Psoas muscle (tissue), 8 donors: ENCODE measurements at regions of chr2 and their contacts with region 1.

Region 1: DNA sequence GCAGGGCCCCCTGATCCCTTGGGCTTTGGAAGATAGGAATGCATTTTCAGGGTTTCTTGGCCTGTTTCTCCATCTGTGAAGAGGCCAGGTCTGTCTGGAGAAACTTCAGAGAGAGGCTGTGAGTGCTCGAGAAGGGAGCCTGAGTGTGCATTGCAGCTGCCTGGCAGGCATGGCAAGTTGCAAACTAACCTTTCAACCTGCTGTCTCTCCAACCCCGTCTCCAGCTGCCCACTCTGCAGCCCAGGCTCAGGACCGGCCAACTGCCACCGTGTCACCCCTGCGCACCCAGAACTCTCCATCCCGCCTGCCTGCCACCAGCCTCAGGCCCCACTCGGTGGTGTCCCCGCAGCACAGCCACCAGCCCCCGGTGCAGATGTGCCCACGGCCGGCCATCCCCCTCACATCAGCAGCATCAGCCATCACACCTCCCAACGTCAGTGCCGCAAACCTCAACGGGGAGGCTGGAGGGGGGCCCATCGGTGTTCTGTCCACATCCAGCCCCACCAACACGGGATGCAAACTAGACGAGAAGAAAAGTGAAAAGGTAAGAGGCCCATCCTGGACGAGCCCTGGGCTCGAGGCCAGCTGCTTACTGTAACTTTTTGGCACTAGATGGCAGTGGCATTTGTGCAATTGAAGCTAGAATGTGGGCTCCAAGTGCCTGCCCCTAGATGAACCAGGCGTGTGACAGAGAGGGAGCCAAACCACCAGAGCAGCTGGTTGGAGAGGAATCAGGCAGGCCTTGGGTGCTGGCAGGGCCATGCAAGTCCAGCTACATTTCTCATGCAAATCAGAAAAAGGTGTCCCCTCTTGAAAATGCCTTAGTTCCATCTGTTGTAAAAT is 164.6 kb downstream of the SEPTIN10 start:
- DNase-seq: peak; percentile 74 to 87
- ATAC-seq: peak; percentile 88 to 92 (median 89)
- H3K4me3 ChIP-seq: peak overlapping the region; percentile 32
- H3K27ac ChIP-seq: peak overlapping the region; percentile 69
- H3K4me1 ChIP-seq: peaks cover 57% of the 10 kb centered on the region
- H3K27me3 ChIP-seq: no peaks in the 10 kb centered on the region
- CTCF ChIP-seq: no peak

Region 2: DNA sequence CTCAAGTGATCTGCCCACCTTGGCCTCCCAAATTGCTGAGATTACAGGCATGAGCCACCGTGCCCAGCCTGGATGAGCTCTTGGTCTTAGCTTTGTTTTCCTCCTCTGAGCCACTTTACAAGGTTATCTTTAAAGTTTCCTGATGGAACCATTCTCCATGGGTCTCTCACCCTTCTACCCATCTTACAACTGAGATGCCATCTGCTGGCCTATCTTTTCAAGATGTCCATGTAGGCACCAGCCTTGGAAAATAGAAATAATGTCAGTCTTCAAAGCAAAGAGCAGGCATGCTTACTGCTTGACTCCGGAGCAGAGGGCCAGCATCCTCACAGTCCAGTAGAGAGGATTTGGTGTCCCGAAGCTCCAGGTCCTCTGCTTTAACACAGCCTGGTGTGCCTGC is 40.8 kb after region 1 on chr2:
- intact Hi-C with region 1: loop called in 1 of 2 experiments (anchors 5 kb)
- DNase-seq: no peak
- ATAC-seq: no peak
- H3K4me3 ChIP-seq: no peak overlapping the region
- H3K27ac ChIP-seq: no peak overlapping the region
- H3K4me1 ChIP-seq: peaks cover 11% of the 10 kb centered on the region
- H3K27me3 ChIP-seq: no peaks in the 10 kb centered on the region
- CTCF ChIP-seq: peak; percentile 12

Region 3: DNA sequence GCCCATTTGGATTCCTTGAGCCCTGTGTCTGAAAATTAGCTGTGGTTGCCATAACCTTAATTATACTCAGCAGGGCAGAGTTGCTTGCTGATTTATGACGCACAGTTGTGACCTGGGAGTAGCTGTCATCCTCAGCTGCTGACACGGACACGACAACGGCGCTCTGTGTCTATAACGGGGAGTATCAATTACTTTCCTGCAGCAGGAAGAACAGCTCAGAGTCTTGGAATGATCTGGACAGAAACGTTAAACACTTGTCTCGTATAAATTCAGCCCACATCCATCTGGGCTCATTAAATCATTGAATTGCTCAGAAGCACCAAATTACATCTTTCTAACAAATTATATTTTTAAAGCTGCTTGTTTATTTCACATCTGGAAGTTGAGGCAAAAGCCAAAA is 48.3 kb after region 1 on chr2:
- intact Hi-C with region 1: loop called (anchors 2 to 5 kb)
- DNase-seq: peak in 1 of 2 donors; percentile 75
- ATAC-seq: peak; percentile 78 to 81 (median 80)
- H3K4me3 ChIP-seq: peak overlapping the region; percentile 36
- H3K27ac ChIP-seq: peak overlapping the region; percentile 81
- H3K4me1 ChIP-seq: peaks cover 26% of the 10 kb centered on the region
- H3K27me3 ChIP-seq: no peaks in the 10 kb centered on the region
- CTCF ChIP-seq: no peak